Activated B cell treated with CpG ODN at 0.5 μM for 24 hours (primary cell): ENCODE measurements at regions of chr15 and their contacts with region 1.

Region 1: GRCh38 chr15:34209421-34210282 is at the start of gene KATNBL1:
- DNase-seq: peak; percentile 97
- ATAC-seq: peak; percentile 93
- H3K4me3 Mint-ChIP-seq: peak within 1 kb of the TSS; percentile 89
- H3K27ac Mint-ChIP-seq: peak within 1 kb of the TSS; percentile 82
- H3K4me1 Mint-ChIP-seq: peaks cover 15% of the 10 kb centered on the region
- H3K27me3 Mint-ChIP-seq: no peaks in the 10 kb centered on the region
- CTCF ChIP-seq: no peak
- total RNA-seq, gene KATNBL1: 46.2 and 53.3 TPM in 2 replicates

Region 2: GRCh38 chr15:34056936-34057335 is 152.7 kb before region 1 on chr15:
- CTCF ChIA-PET with region 1: interaction called, 53 read pairs
- POLR2A ChIA-PET with region 1: interaction called, 3 read pairs
- intact Hi-C with region 1: loop called (anchors 1 kb)
- DNase-seq: no peak
- ATAC-seq: no peak
- H3K4me3 Mint-ChIP-seq: no peak overlapping the region
- H3K27ac Mint-ChIP-seq: no peak overlapping the region
- H3K4me1 Mint-ChIP-seq: peaks cover 4% of the 10 kb centered on the region
- H3K27me3 Mint-ChIP-seq: no peaks in the 10 kb centered on the region
- CTCF ChIP-seq: no peak

Region 3: DNA sequence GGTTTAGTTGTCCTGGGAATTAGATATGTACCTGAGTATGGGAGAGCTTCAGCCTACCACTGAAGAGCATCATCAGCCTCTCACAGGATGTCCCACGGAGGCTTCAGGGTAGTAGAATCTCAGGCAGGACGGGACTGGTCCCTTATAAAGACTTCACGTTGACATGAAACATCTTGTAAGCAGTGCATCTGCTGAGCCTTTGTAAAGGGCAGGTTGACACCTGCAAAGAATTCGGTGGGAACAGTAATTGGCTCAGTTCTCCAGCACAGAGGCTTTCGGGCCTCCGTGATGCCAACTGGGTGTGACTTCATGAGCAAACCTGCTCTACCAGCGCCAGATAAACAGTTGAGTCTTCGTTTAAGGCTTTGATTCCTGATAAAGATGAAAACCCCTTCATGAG is 143.7 kb before region 1 on chr15:
- CTCF ChIA-PET with region 1: interaction called, 53 read pairs
- POLR2A ChIA-PET with region 1: interaction called, 3 read pairs
- intact Hi-C with region 1: loop called (anchors 1 kb)
- DNase-seq: no peak
- ATAC-seq: no peak
- H3K4me3 Mint-ChIP-seq: no peak overlapping the region
- H3K27ac Mint-ChIP-seq: no peak overlapping the region
- H3K4me1 Mint-ChIP-seq: peaks cover 4% of the 10 kb centered on the region
- H3K27me3 Mint-ChIP-seq: no peaks in the 10 kb centered on the region
- CTCF ChIP-seq: no peak

Region 4: GRCh38 chr15:34109797-34110663 is 99.6 kb before region 1 on chr15:
- CTCF ChIA-PET with region 1: interaction called, 52 read pairs
- POLR2A ChIA-PET with region 1: interaction called, 4 read pairs
- intact Hi-C with region 1: loop called (anchors 1 kb)
- DNase-seq: no peak
- ATAC-seq: no peak
- H3K4me3 Mint-ChIP-seq: no peak overlapping the region
- H3K27ac Mint-ChIP-seq: no peak overlapping the region
- H3K4me1 Mint-ChIP-seq: no peaks in the 10 kb centered on the region
- H3K27me3 Mint-ChIP-seq: no peaks in the 10 kb centered on the region
- CTCF ChIP-seq: peak; percentile 27

Region 5: GRCh38 chr15:34154725-34155204 is 54.9 kb before region 1 on chr15:
- CTCF ChIA-PET with region 1: no interaction called
- POLR2A ChIA-PET with region 1: interaction called, 3 read pairs
- intact Hi-C with region 1: loop called (anchors 5 kb)
- DNase-seq: no peak
- ATAC-seq: peak; percentile 68
- H3K4me3 Mint-ChIP-seq: no peak overlapping the region
- H3K27ac Mint-ChIP-seq: peak overlapping the region; percentile 80
- H3K4me1 Mint-ChIP-seq: peaks cover 7% of the 10 kb centered on the region
- H3K27me3 Mint-ChIP-seq: no peaks in the 10 kb centered on the region
- CTCF ChIP-seq: no peak

Region 6: GRCh38 chr15:34223904-34224596 is 14.4 kb after region 1 on chr15:
- CTCF ChIA-PET with region 1: interaction called, 9 read pairs
- POLR2A ChIA-PET with region 1: interaction called, 10 read pairs
- intact Hi-C with region 1: loop called (anchors 1 kb)
- DNase-seq: no peak
- ATAC-seq: peak; percentile 7
- H3K4me3 Mint-ChIP-seq: peak overlapping the region; percentile 92
- H3K27ac Mint-ChIP-seq: peak overlapping the region; percentile 96
- H3K4me1 Mint-ChIP-seq: peaks cover 27% of the 10 kb centered on the region
- H3K27me3 Mint-ChIP-seq: peaks cover 1% of the 10 kb centered on the region
- CTCF ChIP-seq: no peak

Region 7: DNA sequence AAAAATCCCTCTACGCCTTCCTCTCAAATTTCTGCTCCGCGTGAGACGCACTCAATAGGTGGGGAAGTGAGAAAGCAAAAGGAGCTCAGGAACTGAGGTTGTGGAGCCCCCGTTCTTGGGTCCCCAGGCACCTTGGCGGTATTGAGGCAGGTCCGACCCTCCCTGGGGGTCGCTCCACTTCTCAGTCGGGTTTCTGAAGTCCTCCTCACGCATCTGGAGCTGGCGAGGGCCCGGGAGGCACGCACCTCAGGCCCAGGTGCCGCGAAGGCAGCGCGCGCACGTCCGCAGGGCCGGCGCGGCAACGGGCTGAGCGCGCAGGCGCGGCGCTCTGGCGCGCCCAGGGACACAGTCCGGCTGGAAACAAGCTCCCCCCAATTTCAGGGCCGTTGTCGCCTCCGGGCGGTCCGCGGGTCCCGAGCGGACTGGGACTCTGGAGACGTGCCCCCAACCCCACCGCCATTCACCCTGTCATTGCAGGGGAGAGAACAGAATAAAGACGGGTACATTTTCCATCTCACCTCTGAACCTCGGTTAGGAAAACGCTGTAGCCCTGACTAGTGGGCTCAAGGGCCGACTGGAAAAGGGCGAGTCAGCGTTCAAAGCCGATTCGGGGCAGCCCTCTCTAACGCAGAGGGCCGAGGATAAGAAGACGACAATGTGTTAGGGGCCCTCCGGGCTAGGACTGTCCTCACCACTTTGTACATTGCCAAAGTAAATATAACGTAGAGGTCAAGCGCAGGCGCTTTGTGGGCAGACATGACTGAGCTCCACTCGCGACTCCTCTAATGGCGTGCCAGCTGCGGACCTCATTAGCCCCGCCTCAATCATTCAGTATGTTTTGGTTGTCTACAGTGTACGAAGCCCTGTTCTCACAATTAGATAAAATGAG is 778.6 kb after region 1 on chr15 and contains the start of gene ZNF770:
- CTCF ChIA-PET with region 1: no interaction called
- POLR2A ChIA-PET with region 1: interaction called, 5 read pairs
- intact Hi-C with region 1: loop called (anchors 5 kb)
- DNase-seq: peak; percentile 92
- ATAC-seq: peak; percentile 85
- H3K4me3 Mint-ChIP-seq: peak within 1 kb of the TSS; percentile 98
- H3K27ac Mint-ChIP-seq: peak within 1 kb of the TSS; percentile 98
- H3K4me1 Mint-ChIP-seq: peaks cover 37% of the 10 kb centered on the region
- H3K27me3 Mint-ChIP-seq: no peaks in the 10 kb centered on the region
- CTCF ChIP-seq: no peak
- total RNA-seq, gene ZNF770: 46.8 TPM in 2 replicates